Heart left ventricle (tissue), 16 donors: ENCODE measurements at regions of chr1 and their contacts with region 1.

Region 1: GRCh38 chr1:27349784-27350662 is 8.2 kb downstream of the SYTL1 start:
- DNase-seq: peak; percentile 70 to 80 (median 74)
- ATAC-seq: peak in 3 of 4 donors; percentile 52 to 72 (median 60)
- H3K4me3 ChIP-seq: peak overlapping the region; percentile 24 to 61 (median 48)
- H3K27ac ChIP-seq: peak overlapping the region in 2 of 12 donors; percentile 18 to 33
- H3K4me1 ChIP-seq: peaks cover 0 to 31% (median 22%) of the 10 kb centered on the region in 12 donors
- H3K27me3 ChIP-seq: no peaks in the 10 kb centered on the region
- CTCF ChIP-seq: peak in 2 of 12 donors; percentile 9 to 13
- POLR2A ChIP-seq: no peak

Region 2: DNA sequence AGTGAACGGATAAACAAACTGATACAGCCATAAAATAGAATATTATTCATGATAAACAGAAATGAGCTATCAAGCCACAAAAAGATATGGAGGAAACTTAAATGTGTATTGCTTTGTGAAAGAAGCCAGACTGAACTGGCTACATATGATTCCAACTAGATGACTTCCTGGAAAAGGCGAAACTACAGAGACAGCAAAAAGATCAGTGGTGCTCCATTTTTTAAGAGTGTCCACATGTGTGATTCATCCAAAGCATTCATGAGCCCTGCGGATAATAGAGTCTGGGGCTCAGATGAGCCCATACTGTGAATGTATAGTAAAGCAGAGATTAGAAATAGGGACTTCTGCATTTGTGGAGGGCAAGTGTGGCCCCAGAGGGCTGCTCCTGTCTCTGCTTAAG is 35.9 kb before region 1 on chr1:
- intact Hi-C with region 1: loop called in 2 of 10 experiments (anchors 5 to 10 kb)
- DNase-seq: no peak
- ATAC-seq: no peak
- H3K4me3 ChIP-seq: no peak overlapping the region
- H3K27ac ChIP-seq: no peak overlapping the region
- H3K4me1 ChIP-seq: peaks cover 0 to 6% (median 0%) of the 10 kb centered on the region in 12 donors
- H3K27me3 ChIP-seq: peaks cover 0 to 5% (median 0%) of the 10 kb centered on the region in 9 donors
- CTCF ChIP-seq: no peak
- POLR2A ChIP-seq: no peak

Region 3: GRCh38 chr1:27402349-27402754 is 52.3 kb after region 1 on chr1:
- intact Hi-C with region 1: no loop called
- DNase-seq: peak; percentile 68 to 87 (median 83)
- ATAC-seq: peak; percentile 38 to 57 (median 42)
- H3K4me3 ChIP-seq: no peak overlapping the region
- H3K27ac ChIP-seq: peak overlapping the region; percentile 76 to 87 (median 85)
- H3K4me1 ChIP-seq: peaks cover 27 to 96% (median 80%) of the 10 kb centered on the region in 12 donors
- H3K27me3 ChIP-seq: no peaks in the 10 kb centered on the region
- CTCF ChIP-seq: peak; percentile 42 to 70 (median 60)
- POLR2A ChIP-seq: no peak

Region 4: GRCh38 chr1:27568300-27569087 is 218.5 kb after region 1 on chr1:
- intact Hi-C with region 1: no loop called
- DNase-seq: peak; percentile 95 to 97 (median 96)
- ATAC-seq: peak; percentile 71 to 86 (median 80)
- H3K4me3 ChIP-seq: peak overlapping the region in 10 of 12 donors; percentile 6 to 50 (median 42)
- H3K27ac ChIP-seq: peak overlapping the region; percentile 43 to 99 (median 94)
- H3K4me1 ChIP-seq: peaks cover 40 to 100% (median 96%) of the 10 kb centered on the region in 12 donors
- H3K27me3 ChIP-seq: no peaks in the 10 kb centered on the region
- CTCF ChIP-seq: peak; percentile 58 to 90 (median 77)
- POLR2A ChIP-seq: peak in 1 of 2 donors; percentile 59